Activated naive CD4-positive, alpha-beta T cell treated with anti-CD3 and anti-CD28 coated beads for 36 hours (primary cell): ENCODE measurements at regions of chr14 and their contacts with region 1.

Region 1: DNA sequence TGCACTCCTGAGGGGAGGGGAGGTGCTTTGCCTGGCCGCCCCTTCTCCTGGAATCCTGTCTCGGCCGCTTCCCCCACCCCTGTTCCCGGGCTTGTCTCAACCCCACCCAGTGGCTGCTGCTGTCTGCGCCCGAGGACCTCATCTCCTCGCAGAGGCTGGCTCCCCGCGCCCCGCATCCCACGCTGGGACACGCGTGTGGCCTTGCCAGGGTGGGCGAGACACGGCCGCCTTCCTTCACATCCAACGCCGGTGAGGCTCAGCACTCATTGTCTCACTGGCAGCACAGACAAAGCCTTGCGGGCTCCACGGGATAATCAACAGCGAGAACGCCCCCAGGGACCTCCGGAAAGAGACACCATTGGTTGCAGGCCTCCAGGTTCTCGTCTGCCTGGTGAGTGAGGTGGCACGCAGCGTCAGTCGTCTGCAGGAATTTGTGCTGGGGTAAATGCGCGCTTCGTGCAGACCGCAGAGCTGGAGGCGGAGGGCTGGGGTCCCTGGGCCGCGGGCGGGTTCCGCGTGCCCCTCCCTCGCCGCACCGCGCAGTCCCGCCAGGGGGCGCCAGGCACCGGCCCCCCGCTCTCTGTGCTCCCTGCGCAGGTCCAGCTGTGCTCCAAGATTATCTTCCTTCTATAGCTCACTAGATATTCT is 26.8 kb downstream of the CCDC177 start:
- DNase-seq: peak; percentile 18
- H3K4me3 Mint-ChIP-seq: no peak overlapping the region
- H3K27ac Mint-ChIP-seq: no peak overlapping the region
- H3K4me1 Mint-ChIP-seq: peaks cover 6% of the 10 kb centered on the region
- H3K27me3 Mint-ChIP-seq: peaks cover 44% of the 10 kb centered on the region

Region 2: DNA sequence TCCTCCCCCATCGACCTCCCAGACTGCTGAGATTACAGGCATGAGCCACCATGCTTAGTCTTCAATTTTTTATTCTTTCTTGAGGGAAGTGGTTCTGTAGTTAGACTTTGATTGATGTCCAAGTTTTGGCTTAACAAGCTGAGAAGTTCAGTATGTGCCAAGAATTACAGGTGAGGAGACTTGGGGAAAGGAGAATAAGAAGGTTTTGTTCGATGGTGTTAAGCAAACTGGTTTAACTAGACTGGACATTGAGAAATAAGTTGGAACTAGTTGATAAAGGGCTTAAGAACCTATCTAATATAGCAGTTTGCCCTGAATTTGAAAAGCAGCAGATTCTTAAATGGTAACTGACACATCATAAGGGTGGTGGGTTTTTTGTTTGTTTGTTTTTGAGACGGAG is 95.9 kb before region 1 on chr14:
- CTCF ChIA-PET with region 1: no interaction called
- intact Hi-C with region 1: no loop called
- DNase-seq: no peak
- H3K4me3 Mint-ChIP-seq: no peak overlapping the region
- H3K27ac Mint-ChIP-seq: no peak overlapping the region
- H3K4me1 Mint-ChIP-seq: peaks cover 2% of the 10 kb centered on the region
- H3K27me3 Mint-ChIP-seq: no peaks in the 10 kb centered on the region

Region 3: GRCh38 chr14:69559581-69560011 is 11.8 kb after region 1 on chr14:
- CTCF ChIA-PET with region 1: interaction called, 16 read pairs
- intact Hi-C with region 1: no loop called
- DNase-seq: no peak
- H3K4me3 Mint-ChIP-seq: no peak overlapping the region
- H3K27ac Mint-ChIP-seq: no peak overlapping the region
- H3K4me1 Mint-ChIP-seq: no peaks in the 10 kb centered on the region
- H3K27me3 Mint-ChIP-seq: peaks cover 19% of the 10 kb centered on the region